Right ventricle myocardium inferior (tissue), 1 donor: ENCODE measurements at regions of chr20 and their contacts with region 1.

Region 1: DNA sequence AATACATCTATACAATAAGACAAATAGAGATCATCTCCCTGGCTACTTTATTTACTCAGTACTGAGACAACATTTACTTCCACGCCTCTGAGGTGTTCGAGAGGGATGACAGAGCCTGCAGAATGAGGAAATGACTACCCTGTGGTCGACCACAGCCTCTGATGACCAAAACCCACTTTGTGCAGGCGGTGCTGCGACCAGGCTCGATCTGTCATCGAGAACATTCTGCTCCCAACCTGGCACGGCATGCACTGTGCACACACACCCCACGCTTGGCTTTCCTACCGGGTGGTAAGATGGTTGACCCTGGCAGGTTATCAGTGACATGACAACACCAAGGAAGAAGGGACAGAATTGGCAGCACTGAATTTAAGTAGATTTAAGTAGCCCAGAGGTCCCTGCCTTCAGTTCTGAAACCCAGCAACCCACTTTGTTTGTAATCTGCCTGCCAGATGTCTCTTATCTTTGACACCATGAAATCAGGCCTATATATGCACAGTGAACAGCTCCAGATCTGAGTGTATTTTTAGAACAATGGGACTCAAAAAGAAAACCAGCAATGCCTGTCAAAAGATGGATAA is 42.6 kb downstream of the TTI1 start:
- DNase-seq: peak; percentile 86
- ATAC-seq: peak; percentile 72

Region 2: GRCh38 chr20:37564388-37565133 is 426.1 kb before region 1 on chr20:
- intact Hi-C with region 1: loop called (anchors 2 kb)
- DNase-seq: peak; percentile 79
- ATAC-seq: peak; percentile 76

Region 3: GRCh38 chr20:37755665-37756064 is 235.0 kb before region 1 on chr20:
- intact Hi-C with region 1: loop called (anchors 2 kb)
- DNase-seq: no peak
- ATAC-seq: no peak

Region 4: GRCh38 chr20:37880726-37881591 is 109.7 kb before region 1 on chr20:
- intact Hi-C with region 1: loop called (anchors 1 kb)
- DNase-seq: peak; percentile 85
- ATAC-seq: peak; percentile 91

Region 5: GRCh38 chr20:37956084-37956483 is 34.6 kb before region 1 on chr20:
- intact Hi-C with region 1: no loop called
- DNase-seq: no peak
- ATAC-seq: no peak

Region 6: GRCh38 chr20:38156888-38157634 is 166.4 kb after region 1 on chr20:
- intact Hi-C with region 1: loop called (anchors 5 kb)
- DNase-seq: no peak
- ATAC-seq: peak; percentile 65